ENCODE measurements at regions of chr9 and their contacts with region 1.

Region 1: DNA sequence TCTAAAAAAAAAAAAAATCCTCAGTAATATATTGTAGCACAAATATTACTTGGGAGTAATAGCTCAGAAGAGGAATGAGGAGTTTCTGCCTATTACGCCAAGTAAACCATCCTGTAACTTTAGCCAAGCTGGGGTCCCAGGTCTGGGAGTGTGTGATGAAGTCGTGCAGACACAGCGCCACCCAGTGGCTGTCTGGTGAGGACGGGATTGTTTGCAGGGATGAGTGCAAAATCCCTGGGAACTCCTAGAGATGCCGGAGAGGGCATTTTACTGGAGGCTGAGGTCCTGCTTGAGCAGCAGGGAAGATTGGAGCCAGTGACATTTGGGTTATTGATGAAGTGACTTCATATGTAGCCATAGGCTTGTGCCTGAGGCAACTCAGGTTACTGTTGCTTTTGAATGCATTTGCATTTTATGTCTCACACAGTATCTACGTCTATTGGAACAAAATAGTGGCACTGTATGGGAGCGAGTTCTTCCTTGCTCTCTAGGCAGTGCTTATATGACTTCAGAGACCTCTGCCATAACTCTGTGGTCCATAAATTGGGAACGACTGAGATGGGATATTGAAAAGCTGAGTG is 72.8 kb downstream of the PSAT1 start:
- DNase-seq: peak; percentile 59 to 62
- ATAC-seq: peak in 1 of 4 donors; percentile 41
- H3K4me3 ChIP-seq: no peak overlapping the region
- H3K27ac ChIP-seq: no peak overlapping the region
- H3K4me1 ChIP-seq: no peaks in the 10 kb centered on the region
- H3K27me3 ChIP-seq: peaks cover 0 to 4% (median 3%) of the 10 kb centered on the region in 3 donors
- CTCF ChIP-seq: peak; percentile 55

Region 2: DNA sequence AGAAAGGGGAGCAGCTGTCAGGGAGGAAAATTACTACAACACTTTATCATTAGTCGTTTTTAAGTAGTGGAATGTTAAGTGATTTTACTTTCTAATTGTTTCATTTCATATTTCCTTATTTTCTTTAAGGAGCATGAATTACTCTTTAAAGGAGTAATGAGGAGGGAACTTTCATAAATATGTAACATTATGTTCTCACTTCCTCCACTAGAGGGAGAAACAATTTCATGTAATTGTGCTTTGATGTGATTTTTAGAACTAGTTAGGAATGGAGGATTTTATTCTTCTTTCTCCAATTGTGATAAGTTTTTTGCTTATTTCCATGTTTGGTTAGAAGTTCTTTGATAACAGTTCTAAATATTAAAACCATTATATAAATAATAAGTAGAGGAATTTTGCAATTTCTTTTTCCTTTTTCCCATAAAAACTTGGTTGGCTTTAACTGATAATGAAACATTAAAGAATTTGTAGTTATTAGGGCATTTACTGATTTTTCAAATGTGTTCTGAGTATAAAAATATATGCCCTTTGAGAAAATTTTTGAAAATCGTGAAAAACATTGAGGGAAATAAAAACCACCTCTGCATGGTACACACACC is 108.2 kb before region 1 on chr9:
- intact Hi-C with region 1: loop called in 1 of 2 experiments (anchors 5 kb)
- DNase-seq: no peak
- ATAC-seq: no peak
- H3K4me3 ChIP-seq: no peak overlapping the region
- H3K27ac ChIP-seq: no peak overlapping the region
- H3K4me1 ChIP-seq: no peaks in the 10 kb centered on the region
- H3K27me3 ChIP-seq: no peaks in the 10 kb centered on the region
- CTCF ChIP-seq: peak; percentile 70

Region 3: DNA sequence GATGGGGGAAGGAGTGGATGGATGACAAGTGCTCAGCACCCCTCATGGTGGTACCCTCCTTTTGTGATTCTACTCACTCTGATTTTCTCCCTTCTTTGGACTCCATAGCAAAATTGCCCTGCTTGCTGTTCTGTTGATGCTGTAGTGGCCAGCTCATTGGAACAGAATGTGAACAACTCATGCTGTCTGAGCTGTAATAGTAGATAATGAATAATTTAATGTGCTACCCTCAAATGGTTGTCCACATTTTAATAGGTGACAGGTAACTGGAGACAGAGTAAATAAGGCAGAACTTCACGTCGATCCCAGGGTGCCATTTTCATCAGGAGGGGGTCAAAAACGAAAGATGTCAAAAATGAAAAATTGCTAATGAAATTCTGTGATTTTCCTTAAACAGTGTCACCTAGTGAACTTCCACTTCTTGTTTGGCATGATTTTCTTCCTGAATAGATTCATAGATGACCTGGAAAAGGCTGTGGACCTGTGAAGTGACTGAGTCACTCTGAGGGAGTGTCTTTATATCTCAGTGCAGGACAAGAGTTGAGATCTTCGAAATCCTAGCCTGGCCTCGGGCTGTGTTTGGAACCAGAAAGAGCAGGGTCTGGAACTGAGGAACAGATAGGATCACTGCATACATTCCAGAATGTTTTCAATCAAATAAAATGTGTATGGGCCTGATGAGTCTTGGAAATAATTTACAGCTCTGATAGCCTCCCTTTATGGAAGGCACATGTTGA is 197.4 kb after region 1 on chr9:
- intact Hi-C with region 1: no loop called
- DNase-seq: no peak
- ATAC-seq: peak in 2 of 4 donors; percentile 49 to 55
- H3K4me3 ChIP-seq: no peak overlapping the region
- H3K27ac ChIP-seq: no peak overlapping the region
- H3K4me1 ChIP-seq: no peaks in the 10 kb centered on the region
- H3K27me3 ChIP-seq: no peaks in the 10 kb centered on the region
- CTCF ChIP-seq: no peak